Heart right ventricle (tissue), 16 donors: ENCODE measurements at regions of chr6 and their contacts with region 1.

Region 1: GRCh38 chr6:57089687-57090460 is at the start of gene ZNF451:
- DNase-seq: peak; percentile 98 to 99
- ATAC-seq: peak; percentile 98 to 99 (median 99)
- H3K4me3 ChIP-seq: peak within 1 kb of the TSS; percentile 40 to 76 (median 66)
- H3K27ac ChIP-seq: peak within 1 kb of the TSS; percentile 57 to 93 (median 86)
- H3K4me1 ChIP-seq: peaks cover 5 to 41% (median 37%) of the 10 kb centered on the region in 9 donors
- H3K27me3 ChIP-seq: no peaks in the 10 kb centered on the region
- CTCF ChIP-seq: peak in 2 of 9 donors; percentile 9 to 18
- total RNA-seq, gene ZNF451: 19.8 to 33.2 (median 26.8) TPM

Region 2: GRCh38 chr6:57048577-57048976 is 41.3 kb before region 1 on chr6:
- intact Hi-C with region 1: loop called in 2 of 10 experiments (anchors 5 kb)
- DNase-seq: no peak
- ATAC-seq: no peak
- H3K4me3 ChIP-seq: no peak overlapping the region
- H3K27ac ChIP-seq: no peak overlapping the region
- H3K4me1 ChIP-seq: peaks cover 0 to 21% (median 9%) of the 10 kb centered on the region in 9 donors
- H3K27me3 ChIP-seq: no peaks in the 10 kb centered on the region
- CTCF ChIP-seq: no peak

Region 3: DNA sequence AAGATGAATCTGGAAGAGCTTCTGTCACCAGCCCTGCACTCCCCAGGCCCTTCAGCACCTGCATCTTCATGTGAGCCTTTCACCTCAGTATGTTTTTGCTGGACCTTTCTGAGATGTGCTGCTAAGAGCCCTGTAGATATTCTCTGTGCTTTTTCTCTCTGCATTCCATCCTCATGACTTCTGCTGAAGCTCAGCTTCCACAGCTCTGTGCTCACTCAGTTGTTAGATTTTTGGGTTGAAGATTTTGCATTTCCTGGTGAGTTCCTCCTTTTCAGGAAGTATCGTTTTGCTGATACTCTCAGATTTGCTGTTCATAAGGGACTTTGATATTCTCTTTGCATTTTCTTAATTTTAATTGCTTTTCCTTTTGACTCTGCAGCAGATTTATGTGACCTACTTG is 25.1 kb before region 1 on chr6:
- intact Hi-C with region 1: no loop called
- DNase-seq: no peak
- ATAC-seq: no peak
- H3K4me3 ChIP-seq: no peak overlapping the region
- H3K27ac ChIP-seq: no peak overlapping the region
- H3K4me1 ChIP-seq: no peaks in the 10 kb centered on the region
- H3K27me3 ChIP-seq: no peaks in the 10 kb centered on the region
- CTCF ChIP-seq: no peak

Region 4: DNA sequence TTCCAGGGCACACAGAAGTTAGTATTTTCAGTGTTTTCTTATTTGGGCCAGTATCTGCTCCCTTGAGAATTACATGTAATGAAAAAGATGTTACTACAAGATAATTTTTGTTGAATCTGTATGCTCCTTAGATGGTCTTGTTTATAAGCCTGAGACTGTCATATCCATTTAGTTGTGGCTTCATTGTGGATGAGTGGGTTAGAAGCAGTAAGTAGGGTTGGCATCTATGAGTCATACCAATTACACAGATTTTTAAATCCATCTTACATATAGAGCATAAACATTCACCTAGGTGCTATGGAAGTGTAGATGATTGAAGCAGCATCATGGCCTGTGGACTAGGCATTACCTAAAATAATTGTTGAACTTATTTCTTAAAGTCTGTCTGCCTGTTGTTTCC is 68.8 kb after region 1 on chr6:
- intact Hi-C with region 1: loop called in 1 of 10 experiments (anchors 10 kb)
- DNase-seq: no peak
- ATAC-seq: no peak
- H3K4me3 ChIP-seq: no peak overlapping the region
- H3K27ac ChIP-seq: no peak overlapping the region
- H3K4me1 ChIP-seq: no peaks in the 10 kb centered on the region
- H3K27me3 ChIP-seq: no peaks in the 10 kb centered on the region
- CTCF ChIP-seq: no peak

Region 5: GRCh38 chr6:57172136-57173055 is 82.5 kb after region 1 on chr6 and contains the start of gene BAG2:
- intact Hi-C with region 1: loop called in 1 of 10 experiments (anchors 5 kb)
- DNase-seq: peak; percentile 85 to 87
- ATAC-seq: peak; percentile 94 to 98 (median 95)
- H3K4me3 ChIP-seq: peak within 1 kb of the TSS; percentile 57 to 80 (median 76)
- H3K27ac ChIP-seq: peak within 1 kb of the TSS; percentile 88 to 98 (median 91)
- H3K4me1 ChIP-seq: peaks cover 0 to 39% (median 19%) of the 10 kb centered on the region in 9 donors
- H3K27me3 ChIP-seq: no peaks in the 10 kb centered on the region
- CTCF ChIP-seq: peak in 5 of 9 donors; percentile 7 to 46 (median 27)
- total RNA-seq, gene BAG2: 7.2 to 15.6 (median 9.7) TPM

Region 6: DNA sequence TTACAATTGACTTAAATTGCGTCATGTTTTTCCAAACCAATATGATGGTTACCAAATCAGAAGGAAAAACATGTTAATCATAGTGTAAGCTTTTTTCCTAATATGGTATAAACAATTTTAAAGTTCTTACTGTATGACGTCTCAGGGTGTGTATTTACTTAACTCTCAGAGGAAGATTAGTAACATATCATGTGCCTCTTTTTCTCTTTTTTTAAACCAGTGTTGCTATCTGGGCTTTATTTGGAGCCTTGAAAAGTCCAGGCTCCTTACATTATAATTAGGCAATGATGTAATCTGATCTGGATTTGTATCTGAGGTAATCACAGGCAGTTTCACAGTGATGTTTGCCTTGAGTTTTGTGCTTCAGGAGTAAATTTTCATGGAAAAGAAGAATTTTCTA is 152.6 kb after region 1 on chr6:
- intact Hi-C with region 1: no loop called
- DNase-seq: no peak
- ATAC-seq: peak in 5 of 8 donors; percentile 26 to 87 (median 64)
- H3K4me3 ChIP-seq: no peak overlapping the region
- H3K27ac ChIP-seq: peak overlapping the region in 2 of 10 donors; percentile 23 to 44
- H3K4me1 ChIP-seq: peaks cover 0 to 5% (median 0%) of the 10 kb centered on the region in 9 donors
- H3K27me3 ChIP-seq: no peaks in the 10 kb centered on the region
- CTCF ChIP-seq: no peak